A673 (cell line): ENCODE measurements at regions of chr5 and their contacts with region 1.

Region 1: DNA sequence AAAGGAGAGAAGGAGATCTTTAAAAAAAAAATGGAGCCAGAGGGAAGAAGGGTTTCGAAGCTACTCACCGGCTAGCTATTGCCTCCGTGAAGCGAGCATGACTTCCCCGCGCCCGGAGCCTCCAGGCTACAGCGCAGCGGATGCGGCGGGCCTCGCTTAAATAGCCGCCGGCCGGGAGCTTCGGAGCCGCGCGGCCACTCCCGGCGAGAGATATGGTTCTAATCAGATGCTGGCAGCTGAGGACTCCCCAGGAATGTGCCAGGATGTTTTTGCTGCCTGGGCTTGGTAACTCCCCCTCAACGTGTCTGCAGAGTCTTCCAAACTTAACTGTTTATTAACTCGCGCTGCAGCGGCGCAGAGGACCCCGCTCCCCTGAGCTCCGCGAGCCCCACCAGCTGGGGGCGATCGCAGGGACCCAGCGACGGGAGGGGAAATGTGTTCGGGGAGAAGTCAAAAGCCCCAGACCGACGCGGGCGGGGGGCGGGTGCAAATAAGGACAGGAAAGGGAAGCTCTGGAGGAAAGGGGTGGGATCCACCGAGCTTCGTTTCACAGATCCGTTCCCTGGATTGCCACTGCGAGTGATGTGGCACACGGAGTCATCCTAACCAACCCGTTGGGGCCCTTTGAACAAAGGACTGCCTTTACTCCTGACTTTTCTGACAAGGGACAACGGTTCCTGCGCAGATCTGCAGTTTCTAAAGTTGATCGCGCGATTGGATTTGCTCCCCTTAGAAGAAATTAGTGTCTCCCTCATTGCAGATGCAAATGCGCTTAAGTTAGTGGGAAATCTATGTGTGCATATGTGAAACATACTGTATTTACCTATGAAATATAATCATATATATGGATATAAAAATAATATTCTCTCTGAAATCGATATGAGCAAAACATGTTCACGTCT is at the start of gene DAB2:
- DNase-seq: peak; percentile 95
- H3K4me3 ChIP-seq: peak within 1 kb of the TSS; percentile 70
- H3K27ac ChIP-seq: peak within 1 kb of the TSS; percentile 84
- H3K4me1 ChIP-seq: peaks cover 53% of the 10 kb centered on the region
- H3K27me3 ChIP-seq: no peaks in the 10 kb centered on the region
- CTCF ChIP-seq: peak; percentile 78
- total RNA-seq, gene DAB2: 27.7 and 30.1 TPM in 2 replicates

Region 2: GRCh38 chr5:37933576-37933975 is 1491.4 kb before region 1 on chr5:
- CTCF ChIA-PET with region 1: no interaction called
- POLR2A ChIA-PET with region 1: no interaction called
- intact Hi-C with region 1: no loop called
- DNase-seq: no peak
- H3K4me3 ChIP-seq: no peak overlapping the region
- H3K27ac ChIP-seq: no peak overlapping the region
- H3K4me1 ChIP-seq: no peaks in the 10 kb centered on the region
- H3K27me3 ChIP-seq: no peaks in the 10 kb centered on the region
- CTCF ChIP-seq: no peak

Region 3: GRCh38 chr5:38576442-38576841 is 848.5 kb before region 1 on chr5:
- CTCF ChIA-PET with region 1: no interaction called
- POLR2A ChIA-PET with region 1: no interaction called
- intact Hi-C with region 1: no loop called
- DNase-seq: no peak
- H3K4me3 ChIP-seq: no peak overlapping the region
- H3K27ac ChIP-seq: no peak overlapping the region
- H3K4me1 ChIP-seq: no peaks in the 10 kb centered on the region
- H3K27me3 ChIP-seq: no peaks in the 10 kb centered on the region
- CTCF ChIP-seq: no peak

Region 4: GRCh38 chr5:39376293-39376714 is 48.7 kb before region 1 on chr5:
- CTCF ChIA-PET with region 1: interaction called, 10 read pairs
- POLR2A ChIA-PET with region 1: no interaction called
- intact Hi-C with region 1: no loop called
- DNase-seq: peak; percentile 79
- H3K4me3 ChIP-seq: no peak overlapping the region
- H3K27ac ChIP-seq: no peak overlapping the region
- H3K4me1 ChIP-seq: no peaks in the 10 kb centered on the region
- H3K27me3 ChIP-seq: no peaks in the 10 kb centered on the region
- CTCF ChIP-seq: peak; percentile 86

Region 5: GRCh38 chr5:39469777-39470415 is 44.9 kb after region 1 on chr5:
- CTCF ChIA-PET with region 1: no interaction called
- POLR2A ChIA-PET with region 1: no interaction called
- intact Hi-C with region 1: loop called (anchors 2 kb)
- DNase-seq: peak; percentile 95
- H3K4me3 ChIP-seq: no peak overlapping the region
- H3K27ac ChIP-seq: peak overlapping the region; percentile 25
- H3K4me1 ChIP-seq: peaks cover 42% of the 10 kb centered on the region
- H3K27me3 ChIP-seq: no peaks in the 10 kb centered on the region
- CTCF ChIP-seq: no peak

Region 6: DNA sequence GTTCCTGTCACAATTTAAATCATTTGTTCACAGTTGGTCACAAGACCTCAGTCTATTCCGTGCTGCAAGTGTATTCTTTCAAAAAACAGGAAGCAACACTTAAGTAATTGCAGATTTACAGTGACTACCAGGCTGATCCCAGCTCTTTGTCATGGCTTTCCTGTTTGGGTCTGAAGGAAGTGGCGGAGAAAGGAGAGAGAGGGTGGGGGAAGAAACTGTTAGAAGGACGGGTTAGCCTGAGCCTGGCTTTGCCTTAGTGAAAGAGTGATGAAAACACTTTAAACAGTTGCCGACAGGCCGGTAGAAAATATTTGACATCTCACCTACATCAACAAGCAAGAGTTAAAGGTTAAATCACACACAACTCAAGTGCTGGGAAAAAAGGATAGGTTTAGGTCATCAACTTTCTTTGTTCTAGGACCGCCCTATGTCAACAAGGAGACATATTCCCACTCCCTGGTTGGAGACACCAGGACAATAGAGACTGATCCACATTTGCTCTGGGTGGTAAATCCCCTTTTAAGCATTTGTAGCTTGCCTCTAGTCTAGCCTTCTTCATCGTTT is 102.0 kb after region 1 on chr5:
- CTCF ChIA-PET with region 1: interaction called, 9 read pairs
- POLR2A ChIA-PET with region 1: interaction called, 4 read pairs
- intact Hi-C with region 1: loop called (anchors 2 kb)
- DNase-seq: peak; percentile 93
- H3K4me3 ChIP-seq: no peak overlapping the region
- H3K27ac ChIP-seq: peak overlapping the region; percentile 75
- H3K4me1 ChIP-seq: peaks cover 29% of the 10 kb centered on the region
- H3K27me3 ChIP-seq: no peaks in the 10 kb centered on the region
- CTCF ChIP-seq: no peak

Region 7: DNA sequence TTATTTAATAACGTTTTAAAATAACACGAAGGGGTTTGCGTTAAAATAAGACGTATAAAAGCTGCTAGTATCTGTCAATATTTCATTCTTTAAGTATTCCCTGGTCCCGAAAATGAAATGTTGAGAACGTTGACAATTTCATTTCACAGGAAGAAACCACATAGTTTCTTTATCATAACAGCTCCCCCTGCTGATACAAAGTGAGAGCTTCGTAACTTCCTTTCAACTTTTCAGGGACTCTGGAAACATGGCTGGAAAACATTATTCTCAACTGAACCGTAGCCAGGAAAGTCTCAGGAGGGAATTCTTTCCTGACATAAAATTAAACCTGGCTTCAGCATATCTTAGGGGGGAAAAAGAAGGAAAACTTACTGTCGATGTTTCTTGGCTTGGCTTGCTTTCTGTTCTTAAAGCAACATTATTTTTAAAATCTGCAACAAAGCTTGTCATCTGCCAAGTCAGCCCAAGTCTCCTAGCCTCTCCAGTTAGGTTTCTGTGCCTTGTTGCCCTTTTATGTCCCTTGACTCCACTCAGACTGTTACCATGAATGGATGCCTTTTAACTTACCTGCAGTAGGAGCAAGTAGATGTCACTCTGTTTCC is 122.7 kb after region 1 on chr5:
- CTCF ChIA-PET with region 1: interaction called, 14 read pairs
- POLR2A ChIA-PET with region 1: interaction called, 3 read pairs
- intact Hi-C with region 1: loop called (anchors 1 kb)
- DNase-seq: peak; percentile 83
- H3K4me3 ChIP-seq: no peak overlapping the region
- H3K27ac ChIP-seq: no peak overlapping the region
- H3K4me1 ChIP-seq: peaks cover 8% of the 10 kb centered on the region
- H3K27me3 ChIP-seq: no peaks in the 10 kb centered on the region
- CTCF ChIP-seq: peak; percentile 84